Activated CD4-positive, alpha-beta memory T cell treated with anti-CD3 and anti-CD28 coated beads, Interleukin-2, amount 10 ng/mL, durations not matched to agents 7 days and 5 days (primary cell): ENCODE measurements at regions of chr3 and their contacts with region 1.

Region 1: GRCh38 chr3:141452036-141452435 is 34.8 kb upstream of the RASA2 start:
- DNase-seq: peak; percentile 57
- H3K4me3 Mint-ChIP-seq: no peak overlapping the region
- H3K27ac Mint-ChIP-seq: no peak overlapping the region
- H3K4me1 Mint-ChIP-seq: peaks cover 9% of the 10 kb centered on the region
- H3K27me3 Mint-ChIP-seq: no peaks in the 10 kb centered on the region

Region 2: GRCh38 chr3:141303481-141304223 is 148.4 kb before region 1 on chr3:
- CTCF ChIA-PET with region 1: interaction called, 374 read pairs
- POLR2A ChIA-PET with region 1: interaction called, 9 read pairs
- DNase-seq: peak; percentile 60
- H3K4me3 Mint-ChIP-seq: no peak overlapping the region
- H3K27ac Mint-ChIP-seq: no peak overlapping the region
- H3K4me1 Mint-ChIP-seq: peaks cover 37% of the 10 kb centered on the region
- H3K27me3 Mint-ChIP-seq: peaks cover 5% of the 10 kb centered on the region

Region 3: DNA sequence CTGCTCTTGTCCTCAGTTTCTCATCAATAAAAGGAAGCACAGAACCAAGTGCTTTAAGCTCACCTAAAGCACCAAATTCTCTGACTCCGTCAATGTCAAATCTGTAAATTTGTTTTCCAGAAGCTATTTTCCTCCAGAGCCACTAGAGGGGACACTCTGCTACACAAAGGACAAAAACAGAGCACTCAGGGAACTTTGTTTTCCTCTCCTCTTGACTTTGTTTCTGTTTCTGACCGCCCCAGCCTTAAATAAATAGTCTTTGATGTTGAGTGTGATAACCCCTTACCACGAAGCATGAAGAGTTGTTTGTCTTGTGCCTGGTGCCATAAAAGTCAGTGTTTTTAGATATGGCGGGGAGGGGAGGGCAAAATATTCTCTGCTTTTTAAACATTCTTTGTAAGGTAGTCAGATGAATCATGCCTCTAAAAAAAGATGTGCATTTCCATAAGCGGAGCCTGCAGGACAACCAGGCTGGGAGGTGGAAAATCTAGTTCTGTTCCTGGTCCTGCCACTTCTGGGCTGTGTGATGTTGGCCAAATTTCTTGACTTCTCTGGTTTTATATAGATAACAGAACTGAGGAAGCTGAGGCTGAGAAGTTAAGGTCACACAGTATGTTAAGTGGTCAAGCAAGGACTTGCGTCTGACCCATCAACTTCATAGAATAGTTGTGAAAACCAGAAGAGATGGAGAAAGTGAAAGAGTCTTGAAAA is 91.0 kb before region 1 on chr3:
- CTCF ChIA-PET with region 1: interaction called, 136 read pairs
- POLR2A ChIA-PET with region 1: interaction called, 13 read pairs
- DNase-seq: no peak
- H3K4me3 Mint-ChIP-seq: peak overlapping the region; percentile 19
- H3K27ac Mint-ChIP-seq: no peak overlapping the region
- H3K4me1 Mint-ChIP-seq: peaks cover 10% of the 10 kb centered on the region
- H3K27me3 Mint-ChIP-seq: peaks cover 3% of the 10 kb centered on the region

Region 4: GRCh38 chr3:141386611-141387111 is 65.4 kb before region 1 on chr3:
- CTCF ChIA-PET with region 1: interaction called, 10 read pairs
- POLR2A ChIA-PET with region 1: interaction called, 3 read pairs
- DNase-seq: no peak
- H3K4me3 Mint-ChIP-seq: peak overlapping the region; percentile 63
- H3K27ac Mint-ChIP-seq: peak overlapping the region; percentile 65
- H3K4me1 Mint-ChIP-seq: peaks cover 37% of the 10 kb centered on the region
- H3K27me3 Mint-ChIP-seq: no peaks in the 10 kb centered on the region

Region 5: DNA sequence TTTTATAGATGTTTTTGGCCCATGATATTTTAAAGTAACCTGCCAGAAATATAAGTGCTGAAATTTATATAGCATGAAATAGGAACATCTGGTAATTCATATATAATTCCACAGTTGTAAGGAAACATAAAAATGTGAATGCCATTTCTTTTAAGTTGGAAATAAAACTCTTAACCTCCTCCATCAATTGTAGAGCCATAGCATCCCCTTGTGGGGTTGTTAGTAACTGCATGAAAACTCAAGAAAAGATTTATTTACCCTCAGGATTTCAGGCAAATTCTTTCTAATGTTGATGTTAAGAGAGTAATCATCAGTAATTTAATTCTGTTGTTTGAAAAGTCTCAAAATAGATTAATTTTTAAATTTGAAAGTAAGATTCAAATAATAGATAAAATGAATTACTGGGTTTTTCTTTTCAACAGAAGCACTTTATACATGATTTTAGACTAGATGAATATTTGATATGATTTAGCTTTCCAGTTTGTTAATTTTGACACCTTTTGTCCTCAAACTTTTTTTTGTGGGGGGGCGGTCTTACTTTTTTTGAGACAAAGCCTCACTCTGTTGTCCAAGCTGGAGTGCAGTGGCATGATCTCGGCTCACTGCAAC is 109.5 kb after region 1 on chr3:
- CTCF ChIA-PET with region 1: interaction called, 107 read pairs
- POLR2A ChIA-PET with region 1: interaction called, 3 read pairs
- DNase-seq: peak; percentile 32
- H3K4me3 Mint-ChIP-seq: no peak overlapping the region
- H3K27ac Mint-ChIP-seq: no peak overlapping the region
- H3K4me1 Mint-ChIP-seq: peaks cover 28% of the 10 kb centered on the region
- H3K27me3 Mint-ChIP-seq: no peaks in the 10 kb centered on the region

Region 6: DNA sequence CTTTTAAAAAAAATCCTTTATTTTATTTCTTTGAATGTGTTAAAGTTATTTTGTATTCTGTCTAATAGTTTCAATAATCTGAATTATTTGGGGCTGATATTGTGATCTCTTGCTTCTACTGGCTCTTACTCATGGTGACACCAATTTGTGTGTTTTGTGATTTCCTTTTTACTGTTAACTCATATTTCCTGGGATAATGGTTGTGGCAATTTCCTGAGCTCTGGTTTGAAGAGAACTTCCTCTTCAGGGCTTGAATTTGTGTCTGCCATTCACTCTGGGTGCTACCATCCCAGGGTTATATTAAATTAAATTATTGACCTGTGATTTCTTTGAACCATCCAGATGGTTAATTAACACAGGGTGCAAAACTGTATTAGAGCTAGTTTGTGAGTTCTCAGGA is 225.7 kb after region 1 on chr3:
- CTCF ChIA-PET with region 1: no interaction called
- POLR2A ChIA-PET with region 1: no interaction called
- DNase-seq: no peak
- H3K4me3 Mint-ChIP-seq: no peak overlapping the region
- H3K27ac Mint-ChIP-seq: no peak overlapping the region
- H3K4me1 Mint-ChIP-seq: peaks cover 14% of the 10 kb centered on the region
- H3K27me3 Mint-ChIP-seq: peaks cover 14% of the 10 kb centered on the region